ENCODE measurements at regions of chr2 and their contacts with region 1.

Region 1: GRCh38 chr2:190534310-190535120 is at the start of gene NEMP2:
- DNase-seq: peak; percentile 87
- H3K4me3 ChIP-seq: peak within 1 kb of the TSS; percentile 74
- H3K27ac ChIP-seq: peak within 1 kb of the TSS; percentile 86
- H3K4me1 ChIP-seq: peaks cover 35% of the 10 kb centered on the region
- CTCF ChIP-seq: no peak
- total RNA-seq, gene NEMP2: 5.1 and 5.6 TPM in 2 replicates

Region 2: GRCh38 chr2:189661148-189661956 is 873.2 kb before region 1 on chr2 and contains the start of gene ASNSD1:
- CTCF ChIA-PET with region 1: no interaction called
- POLR2A ChIA-PET with region 1: no interaction called
- intact Hi-C with region 1: loop called (anchors 5 kb)
- DNase-seq: peak; percentile 100
- H3K4me3 ChIP-seq: peak within 1 kb of the TSS; percentile 90
- H3K27ac ChIP-seq: peak within 1 kb of the TSS; percentile 38
- H3K4me1 ChIP-seq: peaks cover 41% of the 10 kb centered on the region
- CTCF ChIP-seq: peak; percentile 99
- total RNA-seq, gene ASNSD1: 36.3 and 36.8 TPM in 2 replicates

Region 3: GRCh38 chr2:189952536-189953109 is 581.9 kb before region 1 on chr2:
- CTCF ChIA-PET with region 1: no interaction called
- POLR2A ChIA-PET with region 1: no interaction called
- intact Hi-C with region 1: loop called (anchors 5 kb)
- DNase-seq: peak; percentile 77
- H3K4me3 ChIP-seq: peak overlapping the region; percentile 37
- H3K27ac ChIP-seq: peak overlapping the region; percentile 94
- H3K4me1 ChIP-seq: peaks cover 54% of the 10 kb centered on the region
- CTCF ChIP-seq: no peak

Region 4: DNA sequence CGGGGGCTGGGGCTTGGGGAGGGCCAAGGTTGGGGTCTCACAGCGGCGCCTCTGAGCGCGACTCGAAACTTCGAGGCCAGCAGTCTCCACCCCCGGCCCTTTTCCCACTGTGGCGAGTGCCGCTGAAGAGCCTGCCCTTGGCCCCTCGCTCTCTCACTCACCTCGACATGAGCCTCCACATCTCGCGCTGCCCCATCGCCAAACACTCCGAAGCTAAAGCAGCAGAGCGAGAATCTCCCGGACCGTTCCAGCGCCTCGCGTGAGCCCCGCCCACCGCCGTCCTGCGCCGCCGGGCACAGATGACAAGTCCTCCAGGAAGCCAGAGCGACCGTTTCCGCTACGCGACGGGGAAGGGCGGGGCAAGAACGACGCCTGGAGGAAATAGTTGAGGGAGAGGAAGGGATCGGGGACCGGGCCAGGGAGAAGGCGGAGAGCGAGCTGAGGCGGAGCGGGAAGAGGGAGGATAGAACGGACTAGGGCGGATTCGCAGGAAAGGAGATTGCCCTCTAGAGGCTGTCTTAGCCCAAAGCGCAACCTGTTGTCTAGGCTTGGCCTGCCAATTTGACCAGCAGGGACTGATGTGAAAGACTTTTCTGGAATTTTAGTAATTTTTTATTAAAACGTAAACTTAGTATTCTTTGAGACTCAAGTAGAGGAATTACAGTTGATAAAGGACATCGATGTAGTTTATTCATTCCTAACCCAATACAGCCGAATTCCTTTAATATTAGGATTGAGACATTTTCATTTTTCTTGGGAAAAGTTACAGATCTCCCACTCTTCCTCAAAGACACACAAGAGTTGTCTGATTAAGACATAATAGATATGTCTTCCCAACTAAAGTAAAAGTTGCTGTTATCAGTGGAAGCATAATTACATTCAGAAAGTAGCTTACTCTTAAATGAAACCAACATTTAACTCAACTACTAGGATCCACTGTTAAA is 214.7 kb before region 1 on chr2 and contains the start of gene HIBCH:
- CTCF ChIA-PET with region 1: no interaction called
- POLR2A ChIA-PET with region 1: interaction called, 5 read pairs
- intact Hi-C with region 1: loop called (anchors 2 kb)
- DNase-seq: peak; percentile 92
- H3K4me3 ChIP-seq: peak within 1 kb of the TSS; percentile 74
- H3K27ac ChIP-seq: peak within 1 kb of the TSS; percentile 62
- H3K4me1 ChIP-seq: peaks cover 28% of the 10 kb centered on the region
- CTCF ChIP-seq: peak; percentile 78
- total RNA-seq, gene HIBCH: 15.6 and 17.1 TPM in 2 replicates

Region 5: GRCh38 chr2:190468814-190469569 is 65.5 kb before region 1 on chr2:
- CTCF ChIA-PET with region 1: no interaction called
- POLR2A ChIA-PET with region 1: interaction called, 4 read pairs
- intact Hi-C with region 1: loop called (anchors 5 kb)
- DNase-seq: peak; percentile 31
- H3K4me3 ChIP-seq: peak overlapping the region; percentile 33
- H3K27ac ChIP-seq: peak overlapping the region; percentile 65
- H3K4me1 ChIP-seq: peaks cover 65% of the 10 kb centered on the region
- CTCF ChIP-seq: no peak

Region 6: DNA sequence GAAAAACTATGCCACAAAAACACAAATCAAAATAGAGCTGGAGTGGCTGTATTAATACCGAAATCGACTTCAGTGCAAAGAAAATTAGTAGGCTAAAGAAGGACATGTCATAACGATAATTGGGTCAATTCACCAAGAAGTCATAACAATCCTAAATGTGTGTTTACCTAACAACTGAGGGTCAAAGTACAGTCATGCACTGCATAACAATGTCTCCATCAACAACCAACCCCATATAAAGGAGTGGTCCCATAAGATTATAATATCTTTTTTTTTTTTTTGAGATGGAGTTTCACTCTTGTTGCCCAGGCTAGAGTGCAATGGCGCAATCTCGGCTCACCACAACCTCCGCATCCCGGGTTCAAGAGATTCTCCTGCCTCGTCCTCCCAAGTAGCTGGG is 201.8 kb after region 1 on chr2:
- CTCF ChIA-PET with region 1: no interaction called
- POLR2A ChIA-PET with region 1: no interaction called
- intact Hi-C with region 1: no loop called
- DNase-seq: no peak
- H3K4me3 ChIP-seq: no peak overlapping the region
- H3K27ac ChIP-seq: no peak overlapping the region
- H3K4me1 ChIP-seq: no peaks in the 10 kb centered on the region
- CTCF ChIP-seq: no peak

Region 7: DNA sequence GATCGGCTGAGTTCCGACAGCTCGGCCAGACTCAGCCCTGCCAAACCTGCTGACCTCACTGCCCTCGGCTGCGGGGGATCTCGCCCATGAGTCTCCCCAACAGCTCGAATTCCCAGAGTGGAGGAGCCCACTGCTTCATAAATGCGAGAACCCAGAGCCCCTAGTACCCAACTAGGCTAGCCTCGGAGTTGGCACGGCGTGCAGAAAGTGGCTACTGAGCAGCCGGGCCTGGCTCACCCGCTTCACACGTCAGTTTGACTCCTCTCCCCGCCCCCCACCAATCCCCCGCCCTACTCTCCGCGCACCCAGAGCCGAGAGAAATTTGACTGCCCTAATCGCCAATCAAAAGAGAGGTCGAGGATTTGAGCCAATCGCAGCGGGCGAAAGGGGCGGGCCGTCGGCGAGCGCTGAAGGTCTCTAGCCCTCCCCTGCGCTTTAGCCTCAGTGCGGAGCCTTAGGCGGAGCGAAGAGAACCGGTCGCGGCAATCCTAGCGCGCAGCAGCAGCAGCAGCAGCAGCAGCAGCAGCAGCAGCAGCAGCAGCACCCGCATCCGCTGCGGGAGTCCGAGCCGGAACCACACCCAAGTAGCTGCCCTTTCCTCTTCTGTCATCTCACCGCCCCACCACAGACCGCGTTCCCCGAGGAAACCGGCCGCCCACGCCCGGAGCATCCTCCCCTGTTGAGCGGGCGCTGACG is 346.0 kb after region 1 on chr2 and contains the start of gene GLS:
- CTCF ChIA-PET with region 1: no interaction called
- POLR2A ChIA-PET with region 1: interaction called, 3 read pairs
- intact Hi-C with region 1: loop called (anchors 5 kb)
- DNase-seq: peak; percentile 96
- H3K4me3 ChIP-seq: peak within 1 kb of the TSS; percentile 84
- H3K27ac ChIP-seq: peak within 1 kb of the TSS; percentile 87
- H3K4me1 ChIP-seq: peaks cover 28% of the 10 kb centered on the region
- CTCF ChIP-seq: no peak
- total RNA-seq, gene GLS: 82.0 and 102 TPM in 2 replicates

Region 8: GRCh38 chr2:191051825-191052778 is 517.6 kb after region 1 on chr2:
- CTCF ChIA-PET with region 1: no interaction called
- POLR2A ChIA-PET with region 1: no interaction called
- intact Hi-C with region 1: no loop called
- DNase-seq: peak; percentile 61
- H3K4me3 ChIP-seq: no peak overlapping the region
- H3K27ac ChIP-seq: no peak overlapping the region
- H3K4me1 ChIP-seq: peaks cover 7% of the 10 kb centered on the region
- CTCF ChIP-seq: peak; percentile 90

Measured in OCI-LY7 (cell line).